H1 (cell line): ENCODE measurements at regions of chr2 and their contacts with region 1.

Region 1: GRCh38 chr2:160324161-160324800 is 124.2 kb upstream of the ITGB6 start:
- DNase-seq: no peak
- H3K4me3 ChIP-seq: no peak overlapping the region
- H3K27ac ChIP-seq: no peak overlapping the region
- H3K4me1 ChIP-seq: peaks cover 2 to 5% (median 4%) of the 10 kb centered on the region in 4 experiments; a peak in 4 of 7 replicates
- H3K27me3 ChIP-seq: no peaks in the 10 kb centered on the region
- CTCF ChIP-seq: peak; percentile 14 to 61 (median 49); a peak in 3 of 4 replicates
- EP300 ChIP-seq: no peak
- POLR2A ChIP-seq: no peak
- RAD21 ChIP-seq: peak; percentile 55 to 67

Region 2: GRCh38 chr2:160039166-160039903 is 284.9 kb before region 1 on chr2:
- CTCF ChIA-PET with region 1: no interaction called
- POLR2A ChIA-PET with region 1: no interaction called
- DNase-seq: no peak
- H3K4me3 ChIP-seq: no peak overlapping the region
- H3K27ac ChIP-seq: no peak overlapping the region
- H3K4me1 ChIP-seq: peaks cover 0 to 8% (median 2%) of the 10 kb centered on the region in 4 experiments; a peak in 5 of 7 replicates
- H3K27me3 ChIP-seq: no peaks in the 10 kb centered on the region
- CTCF ChIP-seq: no peak
- EP300 ChIP-seq: no peak
- POLR2A ChIP-seq: no peak
- RAD21 ChIP-seq: no peak

Region 3: DNA sequence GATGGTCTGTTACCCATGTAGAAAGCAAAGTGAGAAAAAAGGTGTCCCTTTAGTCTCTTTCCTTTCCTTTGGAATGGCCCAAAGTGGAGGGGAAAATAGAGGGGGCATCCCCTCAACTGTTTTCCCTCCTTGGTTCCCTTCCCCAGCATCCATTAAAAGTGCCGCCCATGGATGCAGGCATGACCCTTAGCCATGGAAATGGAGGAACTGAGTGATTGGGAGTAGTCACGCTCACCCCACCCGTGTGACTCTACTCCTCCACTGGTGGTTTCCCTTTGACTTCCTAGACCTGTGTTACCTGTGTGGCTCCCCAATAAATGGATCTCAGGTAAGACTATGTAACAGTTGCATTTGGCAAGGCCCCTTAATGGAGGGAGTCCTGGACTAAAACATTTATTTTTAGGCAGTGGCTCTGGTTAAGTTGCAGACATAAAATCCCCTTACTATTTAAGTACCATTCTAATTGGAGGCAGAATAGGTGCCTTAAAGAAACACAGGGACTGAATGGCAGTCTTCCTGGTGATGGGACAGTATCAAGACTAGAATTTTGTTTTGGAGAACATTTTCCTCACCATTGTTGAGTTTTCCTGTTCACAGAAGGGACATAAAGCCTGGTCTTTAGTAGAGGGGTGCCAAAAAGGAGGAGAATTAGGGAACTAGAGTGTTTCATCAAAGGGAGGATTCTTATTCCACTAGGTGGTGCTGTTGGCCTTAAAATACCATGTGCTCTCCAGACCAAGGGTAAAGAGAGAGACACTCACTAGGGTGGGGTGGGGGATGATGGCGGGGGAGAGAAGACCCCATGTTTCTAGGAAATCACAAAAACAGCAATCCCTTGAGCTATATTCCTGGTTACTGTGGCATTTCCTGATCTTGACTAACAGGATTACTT is 236.2 kb before region 1 on chr2:
- CTCF ChIA-PET with region 1: no interaction called
- POLR2A ChIA-PET with region 1: no interaction called
- DNase-seq: peak in 1 of 2 experiments; percentile 60
- H3K4me3 ChIP-seq: no peak overlapping the region
- H3K27ac ChIP-seq: no peak overlapping the region
- H3K4me1 ChIP-seq: no peaks in the 10 kb centered on the region
- H3K27me3 ChIP-seq: no peaks in the 10 kb centered on the region; a peak in 1 of 7 replicates
- CTCF ChIP-seq: peak in 1 of 3 experiments; percentile 10; a peak in 1 of 4 replicates
- EP300 ChIP-seq: no peak
- POLR2A ChIP-seq: no peak
- RAD21 ChIP-seq: peak; percentile 41 to 53

Region 4: DNA sequence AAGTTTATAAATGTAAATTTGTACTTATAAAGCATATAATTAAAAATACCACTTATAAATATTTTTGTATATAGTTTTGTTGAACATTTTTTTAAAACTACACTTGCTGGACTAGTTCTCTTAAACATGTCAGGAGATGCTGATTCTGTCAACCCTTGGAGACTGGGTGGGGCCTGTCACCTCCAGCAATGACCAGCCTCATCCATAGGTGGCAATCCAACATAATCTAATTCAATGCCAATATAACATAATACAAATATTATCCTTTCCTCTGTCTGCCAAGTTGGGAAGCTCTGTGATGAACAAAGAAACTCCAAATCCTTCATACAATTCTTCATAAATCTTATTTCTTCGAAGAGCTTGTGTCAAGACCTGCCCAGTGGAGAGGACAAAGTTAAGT is 28.9 kb after region 1 on chr2:
- CTCF ChIA-PET with region 1: interaction called, 15 read pairs
- POLR2A ChIA-PET with region 1: no interaction called
- DNase-seq: no peak
- H3K4me3 ChIP-seq: no peak overlapping the region
- H3K27ac ChIP-seq: no peak overlapping the region
- H3K4me1 ChIP-seq: no peaks in the 10 kb centered on the region; a peak in 1 of 7 replicates
- H3K27me3 ChIP-seq: no peaks in the 10 kb centered on the region
- CTCF ChIP-seq: peak in 2 of 3 experiments; percentile 15 to 29; a peak in 2 of 4 replicates
- EP300 ChIP-seq: no peak
- POLR2A ChIP-seq: no peak
- RAD21 ChIP-seq: peak; percentile 49 to 60

Region 5: DNA sequence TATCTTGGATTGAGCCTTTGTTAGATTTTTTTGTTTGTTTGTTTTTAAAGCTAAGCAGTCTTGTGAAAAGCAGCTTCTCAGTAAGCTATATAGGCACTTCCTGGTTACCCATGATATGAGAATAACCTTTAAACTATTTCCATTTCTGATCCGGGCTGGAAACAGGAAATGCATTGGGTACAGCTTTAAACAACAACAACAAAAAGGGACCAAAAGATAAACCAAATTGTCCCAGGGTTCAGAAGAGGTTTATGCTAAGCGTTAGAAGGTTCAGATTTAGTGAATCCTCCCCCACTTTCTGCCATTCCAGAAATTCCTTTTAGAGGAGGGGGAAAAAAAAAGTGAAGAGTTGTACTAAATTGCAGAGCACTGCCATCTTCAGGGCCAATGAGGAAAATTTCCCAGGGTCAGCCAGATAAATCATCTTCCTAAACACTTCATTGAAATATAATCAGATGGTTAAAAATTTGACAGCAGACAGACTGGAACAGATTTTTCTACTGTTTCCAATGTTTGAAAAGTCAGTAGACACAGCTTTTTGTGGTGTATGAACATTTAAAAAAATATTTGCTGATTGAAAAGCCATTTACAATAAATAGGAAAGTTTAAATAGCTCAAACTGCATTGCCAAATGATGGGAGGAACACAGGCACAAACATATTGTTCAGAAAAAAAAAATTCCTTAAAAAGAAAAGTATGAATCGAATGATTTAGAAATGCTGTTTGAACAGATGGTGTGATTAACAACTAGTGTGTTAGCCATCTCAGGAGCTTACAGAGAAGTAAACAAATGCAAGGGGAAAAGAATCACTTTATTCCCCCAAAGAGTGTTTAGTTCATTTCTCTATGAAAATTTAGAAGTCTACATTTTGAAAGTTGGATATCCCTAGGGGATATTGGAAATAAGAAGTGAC is 646.0 kb after region 1 on chr2:
- CTCF ChIA-PET with region 1: interaction called, 14 read pairs
- POLR2A ChIA-PET with region 1: no interaction called
- DNase-seq: peak in 1 of 2 experiments; percentile 38
- H3K4me3 ChIP-seq: peak overlapping the region in 1 of 4 experiments; percentile 26; a peak in 1 of 8 replicates
- H3K27ac ChIP-seq: peak overlapping the region; percentile 78
- H3K4me1 ChIP-seq: no peaks in the 10 kb centered on the region
- H3K27me3 ChIP-seq: no peaks in the 10 kb centered on the region
- CTCF ChIP-seq: peak in 2 of 3 experiments; percentile 55 to 63; a peak in 3 of 4 replicates
- EP300 ChIP-seq: peak in 1 of 2 experiments; percentile 81; a peak in 1 of 3 replicates
- POLR2A ChIP-seq: no peak
- RAD21 ChIP-seq: peak; percentile 92